PC-9 (cell line): ENCODE measurements at regions of chr3 and their contacts with region 1.

Region 1: GRCh38 chr3:48879307-48879993 is 19.2 kb downstream of the SLC25A20 start:
- DNase-seq: no peak
- H3K4me3 ChIP-seq: no peak overlapping the region
- H3K27ac ChIP-seq: no peak overlapping the region
- H3K4me1 ChIP-seq: no peaks in the 10 kb centered on the region
- H3K27me3 ChIP-seq: no peaks in the 10 kb centered on the region
- CTCF ChIP-seq: no peak

Region 2: DNA sequence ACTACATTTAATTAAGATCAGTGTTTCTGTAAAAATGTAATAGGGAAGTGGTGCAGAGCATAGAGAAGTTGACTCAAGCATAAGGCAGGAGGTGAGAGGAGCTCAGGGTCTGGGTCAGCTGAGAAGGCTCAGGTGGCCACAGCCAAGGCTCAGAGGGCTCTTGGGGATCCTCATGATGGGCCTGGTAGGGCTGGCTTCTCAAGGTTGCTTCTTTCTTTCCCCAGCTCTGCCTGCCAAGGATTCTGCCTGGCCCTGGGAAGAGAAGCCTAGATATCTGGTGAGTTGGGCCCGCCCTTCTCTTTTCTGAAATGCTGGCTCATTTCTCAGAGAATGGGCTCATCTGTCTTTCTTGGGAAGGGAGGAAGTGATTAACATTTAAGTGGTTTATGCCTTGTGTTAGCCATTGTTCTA is 632.0 kb before region 1 on chr3:
- CTCF ChIA-PET with region 1: interaction called, 16 read pairs
- POLR2A ChIA-PET with region 1: no interaction called
- intact Hi-C with region 1: no loop called
- DNase-seq: no peak
- H3K4me3 ChIP-seq: no peak overlapping the region
- H3K27ac ChIP-seq: no peak overlapping the region
- H3K4me1 ChIP-seq: no peaks in the 10 kb centered on the region
- H3K27me3 ChIP-seq: no peaks in the 10 kb centered on the region
- CTCF ChIP-seq: no peak

Region 3: DNA sequence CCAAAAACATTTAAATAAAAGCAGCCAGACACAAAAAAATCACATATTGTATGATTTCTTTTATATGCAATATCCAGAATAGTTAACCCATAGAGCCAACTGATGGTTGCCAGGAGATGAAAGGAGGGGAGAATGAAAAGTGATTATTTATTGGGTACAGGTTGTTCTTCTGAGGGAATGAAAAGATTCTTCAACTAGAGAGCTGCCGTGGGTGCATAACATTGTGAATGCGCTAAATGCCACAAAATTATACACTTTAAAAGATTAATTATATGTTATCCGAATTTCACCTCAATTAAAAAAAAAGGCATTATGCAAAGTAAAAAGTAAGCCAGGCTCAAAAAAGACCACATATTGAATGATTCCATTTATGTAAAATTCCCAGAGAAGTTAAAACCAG is 67.9 kb before region 1 on chr3:
- CTCF ChIA-PET with region 1: no interaction called
- POLR2A ChIA-PET with region 1: no interaction called
- intact Hi-C with region 1: no loop called
- DNase-seq: no peak
- H3K4me3 ChIP-seq: no peak overlapping the region
- H3K27ac ChIP-seq: no peak overlapping the region
- H3K4me1 ChIP-seq: no peaks in the 10 kb centered on the region
- H3K27me3 ChIP-seq: no peaks in the 10 kb centered on the region
- CTCF ChIP-seq: no peak